ENCODE measurements at regions of chr22 and their contacts with region 1.

Region 1: GRCh38 chr22:37428649-37429586 is 1.6 kb upstream of the ELFN2 start:
- DNase-seq: peak; percentile 71
- ATAC-seq: peak; percentile 66
- H3K4me3 Mint-ChIP-seq: no peak overlapping the region
- H3K27ac Mint-ChIP-seq: no peak overlapping the region
- H3K4me1 Mint-ChIP-seq: peaks cover 21% of the 10 kb centered on the region
- H3K27me3 Mint-ChIP-seq: peaks cover 54% of the 10 kb centered on the region

Region 2: GRCh38 chr22:37316875-37317371 is 112.0 kb before region 1 on chr22:
- CTCF ChIA-PET with region 1: interaction called, 61 read pairs
- POLR2A ChIA-PET with region 1: interaction called, 4 read pairs
- DNase-seq: peak; percentile 84
- ATAC-seq: peak; percentile 85
- H3K4me3 Mint-ChIP-seq: no peak overlapping the region
- H3K27ac Mint-ChIP-seq: peak overlapping the region; percentile 30
- H3K4me1 Mint-ChIP-seq: peaks cover 47% of the 10 kb centered on the region
- H3K27me3 Mint-ChIP-seq: peaks cover 7% of the 10 kb centered on the region

Region 3: DNA sequence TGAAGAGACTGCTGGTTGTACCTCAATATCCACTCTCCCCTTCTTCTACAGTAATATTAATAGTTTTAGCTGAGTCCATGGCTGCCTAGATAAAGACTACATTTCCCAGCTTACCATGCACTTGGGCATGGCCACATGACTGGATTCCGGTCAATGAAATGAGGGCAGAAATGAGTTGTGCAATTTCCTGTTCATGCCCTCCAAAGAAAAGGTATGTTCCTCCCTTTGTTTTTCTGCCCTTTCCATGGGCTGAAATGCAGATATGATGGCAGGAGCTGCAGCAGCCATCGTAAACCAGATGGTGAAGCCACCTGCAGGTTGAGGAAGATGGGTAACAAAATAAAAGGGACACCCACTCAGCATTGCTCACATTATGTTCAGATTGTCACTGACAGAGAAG is 13.6 kb after region 1 on chr22:
- CTCF ChIA-PET with region 1: interaction called, 24 read pairs
- POLR2A ChIA-PET with region 1: no interaction called
- DNase-seq: no peak
- ATAC-seq: no peak
- H3K4me3 Mint-ChIP-seq: no peak overlapping the region
- H3K27ac Mint-ChIP-seq: no peak overlapping the region
- H3K4me1 Mint-ChIP-seq: peaks cover 6% of the 10 kb centered on the region
- H3K27me3 Mint-ChIP-seq: peaks cover 3% of the 10 kb centered on the region